Endothelial cell of umbilical vein (primary cell): ENCODE measurements at regions of chr10 and their contacts with region 1.

Region 1: DNA sequence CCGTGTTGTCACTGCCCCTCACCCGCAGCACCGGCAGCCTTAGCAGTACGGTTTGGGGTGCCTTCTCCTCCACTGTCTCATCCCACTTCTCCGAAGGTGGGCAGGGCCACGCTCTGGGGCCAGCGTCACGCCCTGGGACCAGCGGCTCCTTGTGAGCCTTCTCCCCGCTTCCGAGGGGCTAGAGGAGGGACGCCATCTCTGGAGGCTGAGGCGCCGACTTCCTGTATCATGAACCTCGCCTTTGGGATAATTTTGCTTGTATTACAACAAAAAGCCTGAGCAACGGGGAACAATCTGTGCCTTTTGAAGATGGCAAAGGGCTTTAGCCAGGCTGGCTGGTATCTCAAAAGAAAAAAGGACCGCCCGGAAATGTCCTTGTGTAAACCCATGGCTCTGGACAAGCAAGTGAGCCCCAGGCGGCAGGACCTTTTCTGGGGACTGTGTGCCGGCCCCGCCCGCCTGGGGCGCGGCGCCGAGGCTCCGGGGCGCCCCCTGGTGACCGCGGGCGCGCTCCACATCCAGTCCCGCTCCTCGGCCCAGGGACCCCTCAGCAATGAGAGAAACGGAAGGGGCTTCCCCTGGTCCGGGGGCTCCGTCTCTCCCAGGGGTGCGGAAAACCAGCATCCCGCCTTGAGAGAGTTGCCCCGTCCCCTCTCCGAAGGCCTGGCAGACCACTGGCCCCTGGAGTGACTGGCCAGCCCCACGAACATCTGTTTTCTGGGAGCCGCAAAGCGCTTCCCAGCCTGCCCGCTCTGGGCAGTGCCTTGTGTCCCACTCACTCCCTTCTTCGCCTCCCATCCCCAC is 3.8 kb downstream of the DEPP1 start:
- DNase-seq: peak; percentile 90
- H3K4me3 ChIP-seq: peak overlapping the region in 2 of 3 experiments; percentile 22 to 48
- H3K27ac ChIP-seq: peak overlapping the region; percentile 60
- H3K4me1 ChIP-seq: peaks cover 20% of the 10 kb centered on the region
- H3K27me3 ChIP-seq: no peaks in the 10 kb centered on the region
- CTCF ChIP-seq: peak; percentile 81 to 95
- POLR2A ChIP-seq: peak; percentile 60

Region 2: GRCh38 chr10:43671656-43672531 is 1302.9 kb before region 1 on chr10:
- CTCF ChIA-PET with region 1: no interaction called
- POLR2A ChIA-PET with region 1: no interaction called
- dilution Hi-C with region 1: no loop called
- intact Hi-C with region 1: loop called (anchors 10 kb)
- DNase-seq: peak; percentile 69
- H3K4me3 ChIP-seq: no peak overlapping the region
- H3K27ac ChIP-seq: no peak overlapping the region
- H3K4me1 ChIP-seq: no peaks in the 10 kb centered on the region
- H3K27me3 ChIP-seq: peaks cover 9 to 12% of the 10 kb centered on the region in 2 experiments
- CTCF ChIP-seq: peak; percentile 47 to 64
- POLR2A ChIP-seq: no peak

Region 3: GRCh38 chr10:44801383-44802327 is 173.2 kb before region 1 on chr10:
- CTCF ChIA-PET with region 1: no interaction called
- POLR2A ChIA-PET with region 1: no interaction called
- dilution Hi-C with region 1: no loop called
- intact Hi-C with region 1: no loop called
- DNase-seq: peak; percentile 92
- H3K4me3 ChIP-seq: no peak overlapping the region
- H3K27ac ChIP-seq: peak overlapping the region; percentile 19
- H3K4me1 ChIP-seq: peaks cover 22% of the 10 kb centered on the region
- H3K27me3 ChIP-seq: peaks cover 0 to 2% of the 10 kb centered on the region in 2 experiments
- CTCF ChIP-seq: no peak
- POLR2A ChIP-seq: no peak

Region 4: GRCh38 chr10:44932517-44933450 is 42.0 kb before region 1 on chr10:
- CTCF ChIA-PET with region 1: interaction called, 30 read pairs
- POLR2A ChIA-PET with region 1: interaction called, 5 read pairs
- dilution Hi-C with region 1: no loop called
- intact Hi-C with region 1: loop called (anchors 1 kb)
- DNase-seq: peak; percentile 76
- H3K4me3 ChIP-seq: no peak overlapping the region
- H3K27ac ChIP-seq: no peak overlapping the region
- H3K4me1 ChIP-seq: no peaks in the 10 kb centered on the region
- H3K27me3 ChIP-seq: no peaks in the 10 kb centered on the region
- CTCF ChIP-seq: peak; percentile 88 to 98
- POLR2A ChIP-seq: no peak

Region 5: GRCh38 chr10:44990302-44990655 is 15.4 kb after region 1 on chr10:
- CTCF ChIA-PET with region 1: interaction called, 7 read pairs
- POLR2A ChIA-PET with region 1: interaction called, 48 read pairs
- dilution Hi-C with region 1: no loop called
- intact Hi-C with region 1: no loop called
- DNase-seq: no peak
- H3K4me3 ChIP-seq: no peak overlapping the region
- H3K27ac ChIP-seq: no peak overlapping the region
- H3K4me1 ChIP-seq: peaks cover 9% of the 10 kb centered on the region
- H3K27me3 ChIP-seq: no peaks in the 10 kb centered on the region
- CTCF ChIP-seq: peak in 1 of 2 donors; percentile 38
- POLR2A ChIP-seq: no peak

Region 6: DNA sequence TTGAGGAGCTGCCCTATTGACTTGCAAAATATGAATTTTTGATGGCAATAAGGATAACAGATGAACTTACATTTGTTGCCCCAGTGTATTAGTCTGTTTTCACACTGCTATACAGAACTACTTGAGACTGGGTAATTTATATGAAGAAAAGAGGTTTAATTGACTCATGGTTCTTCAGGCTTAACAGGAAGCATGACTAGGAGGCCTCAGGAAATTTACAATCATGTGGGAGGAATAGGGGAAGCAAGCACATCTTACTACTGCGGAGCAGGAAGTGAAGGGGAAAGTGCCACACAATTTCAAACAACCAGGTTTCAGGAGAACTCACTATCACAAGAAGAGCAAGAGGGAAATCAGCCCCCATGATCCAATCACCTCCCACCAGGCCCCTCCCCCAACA is 83.8 kb after region 1 on chr10:
- CTCF ChIA-PET with region 1: no interaction called
- POLR2A ChIA-PET with region 1: no interaction called
- dilution Hi-C with region 1: no loop called
- intact Hi-C with region 1: loop called (anchors 1 kb)
- DNase-seq: peak; percentile 72
- H3K4me3 ChIP-seq: no peak overlapping the region
- H3K27ac ChIP-seq: peak overlapping the region; percentile 72
- H3K4me1 ChIP-seq: peaks cover 13% of the 10 kb centered on the region
- H3K27me3 ChIP-seq: no peaks in the 10 kb centered on the region
- CTCF ChIP-seq: no peak
- POLR2A ChIP-seq: no peak